AG04449 (cell line): ENCODE measurements at regions of chr3 and their contacts with region 1.

Region 1: GRCh38 chr3:124559881-124560574 is 170.2 kb upstream of the UMPS start:
- DNase-seq: peak; percentile 38
- H3K4me3 ChIP-seq: no peak overlapping the region
- CTCF ChIP-seq: peak; percentile 85

Region 2: GRCh38 chr3:124351430-124352148 is 208.4 kb before region 1 on chr3:
- CTCF ChIA-PET with region 1: interaction called, 99 read pairs
- POLR2A ChIA-PET with region 1: no interaction called
- DNase-seq: peak; percentile 47
- H3K4me3 ChIP-seq: no peak overlapping the region
- CTCF ChIP-seq: peak; percentile 56

Region 3: GRCh38 chr3:124492811-124493210 is 67.2 kb before region 1 on chr3:
- CTCF ChIA-PET with region 1: interaction called, 23 read pairs
- POLR2A ChIA-PET with region 1: no interaction called
- DNase-seq: no peak
- H3K4me3 ChIP-seq: no peak overlapping the region
- CTCF ChIP-seq: peak; percentile 23

Region 4: DNA sequence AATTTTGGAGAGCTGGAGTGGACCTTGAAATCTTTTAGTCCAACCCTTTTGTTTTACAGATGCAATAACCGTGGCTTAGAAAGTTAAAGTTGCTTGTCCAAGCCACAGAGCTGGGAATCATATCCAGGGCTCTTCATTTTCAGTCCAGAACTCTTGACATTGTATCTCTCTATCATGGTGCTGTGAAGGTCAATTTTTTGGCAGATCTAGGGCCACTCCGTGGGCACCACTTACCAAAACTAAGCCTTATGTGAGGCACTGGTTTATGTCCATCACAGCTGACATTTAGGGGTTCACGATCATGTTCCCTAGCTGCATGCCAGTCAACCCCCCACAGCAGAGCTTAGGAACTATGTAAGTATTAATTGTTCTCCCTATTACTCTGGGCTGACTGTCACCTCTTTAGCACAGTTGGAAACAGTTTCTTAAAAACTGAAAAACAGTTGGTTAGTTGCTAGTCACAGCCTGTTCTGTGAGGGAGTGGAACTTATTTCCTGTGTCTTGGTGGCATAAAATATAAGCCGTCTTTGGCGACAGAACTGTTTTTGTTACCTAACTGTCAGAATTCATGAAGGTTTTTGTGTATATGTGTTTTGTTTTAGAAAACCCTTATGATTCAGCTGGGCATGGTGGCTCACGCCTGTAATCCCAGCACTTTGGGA is 19.3 kb before region 1 on chr3:
- CTCF ChIA-PET with region 1: interaction called, 66 read pairs
- POLR2A ChIA-PET with region 1: no interaction called
- DNase-seq: no peak
- H3K4me3 ChIP-seq: no peak overlapping the region
- CTCF ChIP-seq: no peak

Region 5: DNA sequence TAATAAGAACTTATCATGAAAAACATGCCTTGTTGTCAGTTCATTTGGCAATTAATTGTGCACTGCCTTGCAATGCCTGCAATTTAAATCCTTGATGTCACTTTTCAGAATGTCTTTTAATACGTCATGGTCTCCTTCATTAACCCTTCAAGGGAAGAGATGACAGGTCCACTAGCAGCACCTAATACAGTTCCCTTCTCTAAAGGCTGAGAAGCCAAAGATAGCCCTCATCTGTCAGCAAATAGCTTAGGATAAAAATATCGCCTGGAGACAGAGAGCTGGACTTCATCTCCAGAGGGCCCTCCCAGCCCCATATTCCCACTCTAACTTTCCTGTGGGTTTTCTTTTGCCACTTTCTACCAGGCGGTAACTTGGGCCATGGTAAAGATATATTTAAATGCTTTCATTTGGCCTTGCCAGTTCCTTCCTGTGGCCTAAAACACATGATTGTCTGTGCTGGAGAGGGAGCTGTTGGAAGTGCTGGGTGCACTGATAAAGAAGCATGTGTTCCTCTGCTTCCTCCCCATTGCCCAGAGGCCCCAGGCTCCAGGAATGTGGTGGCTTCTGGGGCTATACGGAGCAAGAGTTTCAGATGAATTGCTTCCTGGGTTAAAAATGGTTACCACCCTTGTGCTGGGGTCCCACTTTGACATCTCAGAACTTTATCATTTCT is 93.9 kb after region 1 on chr3:
- CTCF ChIA-PET with region 1: interaction called, 13 read pairs
- POLR2A ChIA-PET with region 1: no interaction called
- DNase-seq: no peak
- H3K4me3 ChIP-seq: no peak overlapping the region
- CTCF ChIP-seq: no peak

Region 6: GRCh38 chr3:124707656-124708062 is 147.6 kb after region 1 on chr3:
- CTCF ChIA-PET with region 1: interaction called, 215 read pairs
- POLR2A ChIA-PET with region 1: no interaction called
- DNase-seq: peak; percentile 86
- H3K4me3 ChIP-seq: no peak overlapping the region
- CTCF ChIP-seq: no peak

Region 7: GRCh38 chr3:125585595-125586223 is 1025.7 kb after region 1 on chr3:
- CTCF ChIA-PET with region 1: interaction called, 14 read pairs
- POLR2A ChIA-PET with region 1: no interaction called
- DNase-seq: no peak
- H3K4me3 ChIP-seq: no peak overlapping the region
- CTCF ChIP-seq: peak; percentile 81